Panc1 (cell line): ENCODE measurements at regions of chr6 and their contacts with region 1.

Region 1: DNA sequence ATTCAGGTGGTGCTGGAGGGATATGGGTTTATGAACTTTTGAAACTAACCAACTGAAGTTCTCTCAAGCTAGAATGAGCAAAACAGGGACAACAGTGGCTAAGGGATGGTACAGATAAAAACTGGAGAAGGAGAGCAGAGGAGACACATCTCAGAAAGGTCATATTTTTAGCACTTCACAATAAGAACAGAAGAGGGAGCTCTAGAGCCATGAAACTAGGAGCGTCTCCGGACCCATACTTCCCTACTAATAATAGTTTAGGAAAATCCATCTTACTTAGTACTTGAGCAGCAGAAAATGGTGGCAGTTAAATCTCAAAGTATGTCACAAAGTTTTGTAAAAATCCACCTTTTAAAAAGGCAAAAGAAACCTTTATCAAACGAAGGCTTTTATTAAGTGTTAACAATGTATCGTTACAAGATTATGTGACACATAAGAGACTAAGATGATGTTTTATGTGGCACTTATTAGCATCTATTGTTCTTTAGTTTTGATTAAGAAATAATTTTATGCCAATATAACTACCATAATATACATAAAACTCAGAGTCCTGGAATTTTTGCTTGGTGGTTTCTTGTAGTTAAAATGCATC is 278.6 kb downstream of the TBC1D32 start:
- DNase-seq: peak; percentile 38
- ATAC-seq: peak; percentile 93
- H3K4me3 ChIP-seq: no peak overlapping the region
- H3K27ac ChIP-seq: no peak overlapping the region
- H3K4me1 ChIP-seq: no peaks in the 10 kb centered on the region
- H3K27me3 ChIP-seq: no peaks in the 10 kb centered on the region
- CTCF ChIP-seq: peak; percentile 79

Region 2: GRCh38 chr6:121008553-121008952 is 47.1 kb before region 1 on chr6:
- CTCF ChIA-PET with region 1: no interaction called
- POLR2A ChIA-PET with region 1: no interaction called
- in situ Hi-C with region 1: no loop called
- intact Hi-C with region 1: no loop called
- DNase-seq: no peak
- ATAC-seq: no peak
- H3K4me3 ChIP-seq: no peak overlapping the region
- H3K27ac ChIP-seq: no peak overlapping the region
- H3K4me1 ChIP-seq: no peaks in the 10 kb centered on the region
- H3K27me3 ChIP-seq: no peaks in the 10 kb centered on the region
- CTCF ChIP-seq: no peak

Region 3: GRCh38 chr6:121222656-121223055 is 167.0 kb after region 1 on chr6:
- CTCF ChIA-PET with region 1: no interaction called
- POLR2A ChIA-PET with region 1: no interaction called
- in situ Hi-C with region 1: no loop called
- intact Hi-C with region 1: loop called (anchors 5 kb)
- DNase-seq: no peak
- ATAC-seq: no peak
- H3K4me3 ChIP-seq: no peak overlapping the region
- H3K27ac ChIP-seq: no peak overlapping the region
- H3K4me1 ChIP-seq: no peaks in the 10 kb centered on the region
- H3K27me3 ChIP-seq: no peaks in the 10 kb centered on the region
- CTCF ChIP-seq: peak; percentile 19; the same call in 1 of the 2 replicates

Region 4: DNA sequence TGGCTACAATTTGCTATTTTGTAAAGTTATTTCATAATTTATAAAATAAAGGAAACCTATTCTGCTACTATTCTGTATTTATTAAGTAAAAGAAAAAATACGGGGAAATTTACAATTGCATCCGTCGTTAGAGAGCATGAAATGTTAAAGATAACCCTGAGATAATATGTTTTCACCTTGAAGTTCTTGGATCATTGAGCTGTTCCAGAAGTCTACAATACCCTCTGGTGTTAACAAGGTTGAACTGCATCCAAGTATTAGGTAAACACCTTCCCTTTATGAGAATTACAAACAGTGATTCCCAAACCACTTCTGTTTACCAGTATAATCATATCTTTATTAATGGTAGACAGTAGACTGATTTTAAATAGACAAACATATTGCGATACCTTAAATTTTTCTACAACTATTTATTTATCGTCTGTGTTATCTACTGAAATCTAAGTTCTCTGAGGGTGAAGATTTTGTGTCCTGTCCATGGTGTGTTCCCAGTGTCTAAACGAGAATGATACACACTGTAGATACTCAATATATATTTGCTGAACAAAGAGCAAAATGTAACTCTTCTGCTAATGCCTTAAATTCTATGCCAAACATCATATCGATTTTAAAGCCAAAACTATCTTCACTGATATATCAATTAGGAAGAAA is 250.4 kb after region 1 on chr6:
- CTCF ChIA-PET with region 1: interaction called, 4 read pairs
- POLR2A ChIA-PET with region 1: no interaction called
- in situ Hi-C with region 1: no loop called
- intact Hi-C with region 1: loop called (anchors 1 kb)
- DNase-seq: peak; percentile 17
- ATAC-seq: peak; percentile 88
- H3K4me3 ChIP-seq: no peak overlapping the region
- H3K27ac ChIP-seq: no peak overlapping the region
- H3K4me1 ChIP-seq: no peaks in the 10 kb centered on the region
- H3K27me3 ChIP-seq: no peaks in the 10 kb centered on the region
- CTCF ChIP-seq: peak; percentile 76; the same call in 1 of the 2 replicates

Region 5: GRCh38 chr6:121399966-121400365 is 344.3 kb after region 1 on chr6:
- CTCF ChIA-PET with region 1: no interaction called
- POLR2A ChIA-PET with region 1: no interaction called
- in situ Hi-C with region 1: no loop called
- intact Hi-C with region 1: loop called (anchors 5 kb)
- DNase-seq: no peak
- ATAC-seq: no peak
- H3K4me3 ChIP-seq: no peak overlapping the region
- H3K27ac ChIP-seq: no peak overlapping the region
- H3K4me1 ChIP-seq: no peaks in the 10 kb centered on the region
- H3K27me3 ChIP-seq: no peaks in the 10 kb centered on the region
- CTCF ChIP-seq: no peak

Region 6: DNA sequence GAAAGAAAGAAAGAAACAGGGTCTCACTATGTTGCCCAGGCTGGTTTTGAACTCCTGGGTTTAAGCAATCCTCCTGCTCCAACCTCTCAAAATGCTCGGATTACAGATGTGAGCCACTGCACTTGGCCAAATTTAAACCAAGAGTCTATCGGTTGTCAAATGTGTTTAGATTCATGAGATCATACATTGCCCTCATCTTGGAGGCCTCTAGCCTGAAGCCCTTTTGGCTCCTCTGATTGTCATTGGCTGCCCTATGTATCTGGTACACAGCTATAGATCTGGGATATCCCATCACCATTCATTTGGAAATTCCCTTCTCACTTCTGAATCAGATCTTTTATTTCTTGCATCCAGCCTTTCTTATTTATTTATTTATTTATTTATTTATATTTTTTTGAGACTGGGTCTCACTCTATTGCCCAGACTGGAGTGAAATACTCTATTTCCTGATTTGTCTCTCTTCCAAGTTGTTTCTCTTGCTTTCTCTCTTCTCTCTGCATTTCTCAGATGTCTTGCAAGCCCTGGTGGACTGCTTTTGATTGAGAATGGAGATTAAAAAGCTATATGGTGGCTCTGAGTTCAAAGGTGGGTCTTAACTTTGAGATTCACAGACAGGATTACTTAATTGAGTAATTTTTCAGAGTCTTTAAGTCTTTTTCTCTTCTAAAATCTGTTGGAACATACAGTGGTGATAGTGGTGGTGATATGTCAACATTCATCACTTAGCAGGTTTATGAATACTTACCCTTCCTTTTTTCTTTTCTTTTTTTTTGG is 501.7 kb after region 1 on chr6:
- CTCF ChIA-PET with region 1: no interaction called
- POLR2A ChIA-PET with region 1: no interaction called
- in situ Hi-C with region 1: no loop called
- intact Hi-C with region 1: no loop called
- DNase-seq: no peak
- ATAC-seq: no peak
- H3K4me3 ChIP-seq: no peak overlapping the region
- H3K27ac ChIP-seq: no peak overlapping the region
- H3K4me1 ChIP-seq: no peaks in the 10 kb centered on the region
- H3K27me3 ChIP-seq: no peaks in the 10 kb centered on the region
- CTCF ChIP-seq: no peak

Region 7: GRCh38 chr6:121800047-121800446 is 744.4 kb after region 1 on chr6:
- CTCF ChIA-PET with region 1: no interaction called
- POLR2A ChIA-PET with region 1: no interaction called
- in situ Hi-C with region 1: no loop called
- intact Hi-C with region 1: no loop called
- DNase-seq: no peak
- ATAC-seq: no peak
- H3K4me3 ChIP-seq: no peak overlapping the region
- H3K27ac ChIP-seq: no peak overlapping the region
- H3K4me1 ChIP-seq: no peaks in the 10 kb centered on the region
- H3K27me3 ChIP-seq: no peaks in the 10 kb centered on the region
- CTCF ChIP-seq: no peak